Thyroid gland (tissue), 4 donors: ENCODE measurements at regions of chr7 and their contacts with region 1.

Region 1: DNA sequence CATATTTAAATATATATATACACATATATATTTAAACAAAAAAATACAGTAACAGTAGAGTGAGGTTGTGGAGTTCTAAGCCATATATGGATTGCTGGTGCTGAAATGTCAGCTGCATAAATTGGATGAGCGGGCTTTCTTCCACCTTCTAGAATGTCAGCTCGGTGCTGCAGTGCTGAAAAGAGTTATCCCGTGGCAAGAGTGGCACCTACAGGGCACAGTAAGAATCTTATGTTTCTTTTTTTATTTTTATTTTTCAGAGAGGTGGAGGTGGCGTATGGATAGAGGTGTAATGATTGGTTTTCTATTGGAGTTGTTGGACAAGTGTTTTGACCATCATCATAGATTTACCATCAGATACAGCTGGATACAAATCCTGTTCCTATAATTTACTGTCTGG is 86.2 kb upstream of the DYNC1I1 start:
- DNase-seq: peak; percentile 57 to 61
- H3K4me3 ChIP-seq: no peak overlapping the region
- H3K27ac ChIP-seq: no peak overlapping the region
- H3K4me1 ChIP-seq: peaks cover 4 to 10% of the 10 kb centered on the region in 2 donors
- H3K27me3 ChIP-seq: no peaks in the 10 kb centered on the region
- CTCF ChIP-seq: peak in 5 of 6 experiments; percentile 11 to 84 (median 59)
- POLR2A ChIP-seq: no peak

Region 2: GRCh38 chr7:95511716-95512260 is 174.3 kb before region 1 on chr7:
- intact Hi-C with region 1: loop called (anchors 5 kb)
- DNase-seq: peak; percentile 73 to 75
- H3K4me3 ChIP-seq: no peak overlapping the region
- H3K27ac ChIP-seq: no peak overlapping the region
- H3K4me1 ChIP-seq: no peaks in the 10 kb centered on the region
- H3K27me3 ChIP-seq: no peaks in the 10 kb centered on the region
- CTCF ChIP-seq: peak; percentile 79 to 90 (median 84)
- POLR2A ChIP-seq: no peak

Region 3: DNA sequence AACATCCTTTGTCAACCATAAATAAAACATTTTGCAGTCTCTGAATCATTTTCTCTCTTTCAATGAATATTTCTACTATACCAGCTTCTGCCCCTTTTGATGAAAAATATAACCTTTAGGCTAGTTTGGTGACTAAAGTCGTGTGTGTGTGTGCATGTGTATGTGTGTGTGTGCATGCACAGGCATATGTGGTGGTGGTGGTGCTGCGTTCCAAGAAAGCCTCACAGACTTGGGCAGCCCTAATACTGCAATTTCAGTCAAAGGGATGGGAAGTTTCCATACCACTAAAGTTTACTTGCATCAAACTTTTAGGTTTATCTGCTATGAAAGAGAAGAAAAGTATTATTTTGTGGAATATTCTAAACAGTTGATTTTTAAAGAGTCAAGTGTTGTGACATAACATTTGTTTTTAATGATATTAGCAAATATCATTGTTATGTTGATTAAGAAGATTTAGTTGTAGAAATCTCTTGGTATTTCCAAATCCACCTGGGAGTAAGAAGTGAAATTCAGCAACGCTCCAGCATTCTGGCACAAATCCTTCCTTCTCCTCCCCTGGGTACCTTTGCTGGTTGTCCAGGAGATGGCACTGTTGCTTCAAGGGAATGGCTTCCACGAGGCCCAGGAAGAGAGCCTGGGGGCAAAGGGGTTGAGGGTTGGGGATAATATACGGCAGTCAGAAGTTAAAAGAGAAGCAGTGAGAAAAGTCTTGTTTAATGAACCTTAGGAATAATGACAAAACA is 158.9 kb before region 1 on chr7:
- intact Hi-C with region 1: loop called (anchors 5 kb)
- DNase-seq: peak; percentile 48 to 50
- H3K4me3 ChIP-seq: no peak overlapping the region
- H3K27ac ChIP-seq: no peak overlapping the region
- H3K4me1 ChIP-seq: peaks cover 1 to 5% of the 10 kb centered on the region in 2 donors
- H3K27me3 ChIP-seq: no peaks in the 10 kb centered on the region
- CTCF ChIP-seq: peak; percentile 54 to 97 (median 85)
- POLR2A ChIP-seq: no peak

Region 4: DNA sequence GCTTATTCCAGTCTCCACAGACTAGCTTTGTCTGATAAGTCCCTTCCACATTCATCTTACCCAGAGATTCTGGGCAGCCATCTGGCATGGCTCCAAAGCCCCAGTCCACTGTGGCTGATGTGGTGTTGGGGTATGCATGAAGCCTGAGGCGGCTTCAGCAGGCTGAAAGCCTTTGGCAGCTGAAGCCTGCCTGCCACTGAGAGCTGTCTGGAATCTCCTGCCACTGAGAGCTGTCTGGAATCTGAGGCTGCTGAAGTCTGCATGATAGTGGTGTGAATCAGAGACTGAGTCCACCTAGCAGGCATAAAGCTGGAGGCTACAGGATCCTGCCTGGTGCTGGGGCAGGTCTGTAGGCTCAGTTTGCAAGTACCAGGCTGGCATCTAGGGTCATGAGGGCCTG is 173.3 kb after region 1 on chr7:
- intact Hi-C with region 1: no loop called
- DNase-seq: no peak
- H3K4me3 ChIP-seq: no peak overlapping the region
- H3K27ac ChIP-seq: no peak overlapping the region
- H3K4me1 ChIP-seq: no peaks in the 10 kb centered on the region
- H3K27me3 ChIP-seq: no peaks in the 10 kb centered on the region
- CTCF ChIP-seq: no peak
- POLR2A ChIP-seq: no peak